PC-9 (cell line): ENCODE measurements at regions of chr3 and their contacts with region 1.

Region 1: GRCh38 chr3:46976326-46977190 is at the start of gene CCDC12:
- DNase-seq: peak; percentile 94 to 97
- H3K4me3 ChIP-seq: peak within 1 kb of the TSS; percentile 88
- H3K27ac ChIP-seq: peak within 1 kb of the TSS; percentile 62
- H3K4me1 ChIP-seq: peaks cover 39% of the 10 kb centered on the region
- H3K27me3 ChIP-seq: no peaks in the 10 kb centered on the region
- CTCF ChIP-seq: no peak
- total RNA-seq, gene CCDC12: 39.3 and 43.1 TPM in 2 replicates

Region 2: GRCh38 chr3:46909535-46910442 is 66.8 kb before region 1 on chr3:
- CTCF ChIA-PET with region 1: interaction called, 3 read pairs
- POLR2A ChIA-PET with region 1: interaction called, 23 read pairs
- intact Hi-C with region 1: no loop called
- DNase-seq: peak; percentile 38 to 79
- H3K4me3 ChIP-seq: no peak overlapping the region
- H3K27ac ChIP-seq: no peak overlapping the region
- H3K4me1 ChIP-seq: no peaks in the 10 kb centered on the region
- H3K27me3 ChIP-seq: no peaks in the 10 kb centered on the region
- CTCF ChIP-seq: peak; percentile 88

Region 3: GRCh38 chr3:46947981-46948791 is 28.4 kb before region 1 on chr3:
- CTCF ChIA-PET with region 1: interaction called, 8 read pairs
- POLR2A ChIA-PET with region 1: interaction called, 4 read pairs
- intact Hi-C with region 1: loop called (anchors 1 kb)
- DNase-seq: peak; percentile 89 to 95
- H3K4me3 ChIP-seq: no peak overlapping the region; the same call in 1 of the 2 replicates
- H3K27ac ChIP-seq: peak overlapping the region; percentile 87
- H3K4me1 ChIP-seq: peaks cover 71% of the 10 kb centered on the region
- H3K27me3 ChIP-seq: no peaks in the 10 kb centered on the region
- CTCF ChIP-seq: no peak

Region 4: GRCh38 chr3:46960081-46960701 is 16.4 kb before region 1 on chr3:
- CTCF ChIA-PET with region 1: interaction called, 5 read pairs
- POLR2A ChIA-PET with region 1: interaction called, 18 read pairs
- intact Hi-C with region 1: loop called (anchors 1 kb)
- DNase-seq: peak; percentile 67 to 85
- H3K4me3 ChIP-seq: no peak overlapping the region
- H3K27ac ChIP-seq: peak overlapping the region; percentile 64
- H3K4me1 ChIP-seq: peaks cover 37% of the 10 kb centered on the region
- H3K27me3 ChIP-seq: no peaks in the 10 kb centered on the region
- CTCF ChIP-seq: no peak

Region 5: DNA sequence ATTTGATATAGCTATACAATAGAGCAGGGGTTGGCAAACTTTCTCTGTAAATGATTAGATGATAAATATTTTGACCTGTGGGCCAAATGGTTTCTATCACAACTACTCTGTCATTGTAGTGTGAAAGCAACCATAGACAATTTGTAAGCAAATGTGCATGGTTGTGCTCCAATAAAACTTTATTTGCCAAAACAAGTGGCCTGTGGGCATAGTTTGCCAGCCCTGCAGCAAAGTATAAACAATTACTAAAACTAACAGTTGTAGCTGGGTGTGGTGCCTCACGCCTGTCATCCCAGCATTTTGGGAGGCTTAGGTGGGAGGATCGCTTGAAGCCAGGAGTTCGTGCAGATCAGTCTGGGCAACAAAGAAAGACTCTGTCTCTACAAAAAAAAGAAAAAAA is 64.5 kb after region 1 on chr3:
- CTCF ChIA-PET with region 1: no interaction called
- POLR2A ChIA-PET with region 1: interaction called, 10 read pairs
- intact Hi-C with region 1: no loop called
- DNase-seq: no peak
- H3K4me3 ChIP-seq: no peak overlapping the region
- H3K27ac ChIP-seq: no peak overlapping the region
- H3K4me1 ChIP-seq: no peaks in the 10 kb centered on the region
- H3K27me3 ChIP-seq: no peaks in the 10 kb centered on the region
- CTCF ChIP-seq: no peak

Region 6: DNA sequence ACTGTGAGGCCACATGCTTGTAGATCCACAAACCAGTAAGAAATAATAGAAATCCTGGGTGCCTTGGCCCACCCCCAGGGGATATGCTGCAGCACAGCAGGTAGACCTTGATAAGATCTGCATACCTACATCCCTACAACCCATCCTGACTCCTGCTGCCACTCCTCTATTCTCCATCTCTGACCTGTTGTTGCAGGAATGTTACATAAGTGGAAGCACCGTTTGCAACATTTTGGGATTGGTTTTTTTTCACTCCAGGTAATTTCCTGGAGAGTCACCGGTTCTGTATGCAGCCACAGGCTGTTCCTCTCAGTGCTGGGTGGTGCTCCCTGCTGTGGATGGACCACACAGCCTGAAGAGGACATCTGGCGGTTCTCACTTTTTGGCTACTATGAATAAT is 618.2 kb after region 1 on chr3:
- CTCF ChIA-PET with region 1: no interaction called
- POLR2A ChIA-PET with region 1: no interaction called
- intact Hi-C with region 1: no loop called
- DNase-seq: peak in 1 of 2 experiments; percentile 59
- H3K4me3 ChIP-seq: no peak overlapping the region
- H3K27ac ChIP-seq: no peak overlapping the region
- H3K4me1 ChIP-seq: no peaks in the 10 kb centered on the region
- H3K27me3 ChIP-seq: no peaks in the 10 kb centered on the region
- CTCF ChIP-seq: no peak